K562 (cell line): ENCODE measurements at regions of chr4 and their contacts with region 1.

Region 1: GRCh38 chr4:184745831-184746795 is 12.2 kb upstream of the CENPU start:
- DNase-seq: peak; percentile 68 to 83 (median 74)
- ATAC-seq: peak; percentile 86
- H3K4me3 ChIP-seq: no peak overlapping the region
- H3K27ac ChIP-seq: peak overlapping the region; percentile 6; the same call in 1 of the 3 replicates
- H3K4me1 ChIP-seq: peaks cover 18 to 20% of the 10 kb centered on the region in 2 experiments
- H3K27me3 ChIP-seq: no peaks in the 10 kb centered on the region
- CTCF ChIP-seq: peak; percentile 77 to 82 (median 78)
- EP300 ChIP-seq: no peak; the same call in 1 of the 2 replicates
- POLR2A ChIP-seq: no peak
- RAD21 ChIP-seq: peak; percentile 87 to 88

Region 2: DNA sequence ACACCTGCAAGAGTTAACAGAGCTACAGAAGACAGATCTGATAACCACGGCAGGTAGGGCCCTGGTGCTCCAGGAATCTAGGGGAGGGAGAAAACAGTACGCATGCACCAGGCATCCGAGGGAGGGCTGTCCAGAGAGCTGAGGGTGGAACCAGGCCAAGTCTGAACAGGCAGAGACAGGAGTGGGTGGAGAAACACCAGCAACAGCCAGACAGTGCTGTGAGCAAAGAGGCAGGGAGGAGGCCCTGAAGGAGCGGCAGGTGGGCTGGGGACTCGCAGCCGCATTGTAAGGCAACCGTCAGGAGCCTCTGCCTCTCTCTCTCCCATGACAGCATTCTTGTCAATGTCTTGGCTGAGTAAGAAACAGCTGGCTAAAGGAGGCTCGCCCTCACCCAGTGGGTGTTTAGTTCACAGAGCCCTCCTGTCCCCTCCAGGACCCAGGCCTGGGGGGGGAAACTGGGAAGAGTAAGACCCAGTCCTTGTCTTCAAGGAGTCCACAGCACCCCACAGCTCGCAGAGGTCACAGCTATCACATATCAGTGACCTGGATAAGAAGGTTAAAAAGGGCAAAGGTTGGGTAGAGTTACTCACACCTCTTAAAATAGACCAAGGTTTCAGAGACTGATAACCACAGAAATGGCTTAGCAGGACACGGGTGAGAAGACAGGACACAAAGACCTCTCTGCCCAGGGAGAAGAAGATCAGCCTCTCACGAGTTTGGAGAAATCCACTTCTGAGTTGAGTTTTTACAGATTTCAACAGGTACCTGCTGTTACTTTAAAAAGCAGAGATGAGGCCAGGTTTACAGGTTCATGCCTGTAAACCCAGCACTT is 69.1 kb after region 1 on chr4:
- CTCF ChIA-PET with region 1: no interaction called
- POLR2A ChIA-PET with region 1: no interaction called
- in situ Hi-C with region 1: no loop called
- intact Hi-C with region 1: loop called (anchors 1 kb)
- DNase-seq: peak; percentile 42 to 86 (median 62)
- ATAC-seq: peak; percentile 93
- H3K4me3 ChIP-seq: no peak overlapping the region
- H3K27ac ChIP-seq: peak overlapping the region; percentile 37; the same call in 2 of the 3 replicates
- H3K4me1 ChIP-seq: peaks cover 26 to 51% of the 10 kb centered on the region in 2 experiments
- H3K27me3 ChIP-seq: no peaks in the 10 kb centered on the region
- CTCF ChIP-seq: no peak
- EP300 ChIP-seq: peak; percentile 74
- POLR2A ChIP-seq: no peak
- RAD21 ChIP-seq: 0 out of 4 replicates have a peak, but pooled peaks of 1 of the 2 experiments have one; percentile 12

Region 3: GRCh38 chr4:184978211-184978610 is 232.1 kb after region 1 on chr4:
- CTCF ChIA-PET with region 1: no interaction called
- POLR2A ChIA-PET with region 1: no interaction called
- in situ Hi-C with region 1: loop called (anchors 10 kb)
- intact Hi-C with region 1: loop called (anchors 5 kb)
- DNase-seq: no peak
- ATAC-seq: no peak
- H3K4me3 ChIP-seq: no peak overlapping the region
- H3K27ac ChIP-seq: no peak overlapping the region
- H3K4me1 ChIP-seq: peaks cover 0 to 5% of the 10 kb centered on the region in 2 experiments; a peak in 2 of 5 replicates
- H3K27me3 ChIP-seq: peaks cover 16 to 38% of the 10 kb centered on the region in 2 experiments
- CTCF ChIP-seq: no peak
- EP300 ChIP-seq: no peak
- POLR2A ChIP-seq: no peak
- RAD21 ChIP-seq: no peak

Region 4: GRCh38 chr4:185005216-185005819 is 259.2 kb after region 1 on chr4:
- CTCF ChIA-PET with region 1: no interaction called
- POLR2A ChIA-PET with region 1: no interaction called
- in situ Hi-C with region 1: no loop called
- intact Hi-C with region 1: loop called (anchors 5 kb)
- DNase-seq: peak; percentile 77 to 88 (median 78)
- ATAC-seq: peak; percentile 97
- H3K4me3 ChIP-seq: no peak overlapping the region
- H3K27ac ChIP-seq: no peak overlapping the region
- H3K4me1 ChIP-seq: peaks cover 0 to 9% of the 10 kb centered on the region in 2 experiments; a peak in 2 of 5 replicates
- H3K27me3 ChIP-seq: peaks cover 38 to 70% of the 10 kb centered on the region in 2 experiments
- CTCF ChIP-seq: peak; percentile 87 to 93 (median 87)
- EP300 ChIP-seq: no peak
- POLR2A ChIP-seq: no peak
- RAD21 ChIP-seq: peak; percentile 76 to 82

Region 5: GRCh38 chr4:185134307-185134869 is 388.3 kb after region 1 on chr4:
- CTCF ChIA-PET with region 1: no interaction called
- POLR2A ChIA-PET with region 1: no interaction called
- in situ Hi-C with region 1: no loop called
- intact Hi-C with region 1: loop called (anchors 1 kb)
- DNase-seq: peak; percentile 40 to 67 (median 46)
- ATAC-seq: peak; percentile 89
- H3K4me3 ChIP-seq: no peak overlapping the region
- H3K27ac ChIP-seq: no peak overlapping the region
- H3K4me1 ChIP-seq: peaks cover 0 to 3% of the 10 kb centered on the region in 2 experiments; a peak in 1 of 5 replicates
- H3K27me3 ChIP-seq: no peaks in the 10 kb centered on the region; a peak in 1 of 5 replicates
- CTCF ChIP-seq: peak; percentile 59 to 88 (median 71); a peak in 5 of 6 replicates
- EP300 ChIP-seq: no peak
- POLR2A ChIP-seq: no peak
- RAD21 ChIP-seq: peak; percentile 85 to 89

Region 6: DNA sequence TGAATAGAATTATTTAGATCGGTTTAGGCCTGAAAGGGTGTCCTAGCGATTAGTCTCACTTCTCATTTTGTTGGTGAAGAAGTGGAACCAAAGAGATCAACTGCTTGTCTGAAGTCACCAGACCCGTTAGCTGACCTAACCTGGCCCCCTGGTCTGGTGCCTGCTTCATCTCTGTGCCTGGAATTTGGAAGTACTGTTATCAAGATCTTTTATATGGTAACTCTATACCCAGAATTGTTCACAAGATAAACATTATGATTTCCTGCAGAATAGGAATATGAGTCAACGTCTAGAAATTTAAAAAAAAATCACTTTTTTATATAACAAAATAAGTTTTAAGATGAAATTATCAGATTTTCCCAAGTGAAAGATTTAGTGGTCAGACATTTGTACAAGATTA is 612.4 kb after region 1 on chr4:
- CTCF ChIA-PET with region 1: no interaction called
- POLR2A ChIA-PET with region 1: no interaction called
- in situ Hi-C with region 1: no loop called
- intact Hi-C with region 1: no loop called
- DNase-seq: peak; percentile 29 to 58 (median 51)
- ATAC-seq: peak; percentile 59
- H3K4me3 ChIP-seq: no peak overlapping the region
- H3K27ac ChIP-seq: peak overlapping the region; percentile 58; the same call in 2 of the 3 replicates
- H3K4me1 ChIP-seq: peaks cover 13 to 37% of the 10 kb centered on the region in 2 experiments
- H3K27me3 ChIP-seq: no peaks in the 10 kb centered on the region
- CTCF ChIP-seq: no peak
- EP300 ChIP-seq: no peak
- POLR2A ChIP-seq: no peak
- RAD21 ChIP-seq: no peak